IMR-90 (cell line): ENCODE measurements at regions of chr16 and their contacts with region 1.

Region 1: GRCh38 chr16:87114832-87115231 is 202.4 kb downstream of the C16orf95 start:
- DNase-seq: no peak
- ATAC-seq: no peak
- H3K4me3 ChIP-seq: no peak overlapping the region
- H3K27ac ChIP-seq: no peak overlapping the region
- H3K4me1 ChIP-seq: no peaks in the 10 kb centered on the region
- H3K27me3 ChIP-seq: peaks cover 39% of the 10 kb centered on the region
- CTCF ChIP-seq: no peak
- POLR2A ChIP-seq: no peak
- RAD21 ChIP-seq: no peak

Region 2: DNA sequence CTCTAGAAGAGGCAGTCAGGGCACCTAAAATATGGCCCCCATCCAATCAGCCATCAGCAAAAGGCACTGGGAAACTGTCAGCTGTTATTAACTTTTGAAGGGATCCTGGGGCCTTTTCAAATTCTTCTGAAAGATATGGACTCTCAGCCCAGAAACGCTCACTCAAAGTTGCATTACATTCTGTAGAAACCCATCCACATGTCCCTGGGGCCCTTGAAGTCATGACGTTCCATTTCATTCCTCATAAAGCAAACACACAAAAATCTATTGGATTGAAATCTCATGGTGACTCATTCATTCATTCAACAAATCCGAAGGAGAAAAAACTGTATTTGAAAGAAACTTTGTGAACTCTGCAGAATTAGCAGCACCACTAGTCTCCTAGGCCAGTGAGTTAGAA is 12.9 kb before region 1 on chr16:
- CTCF ChIA-PET with region 1: interaction called, 10 read pairs
- POLR2A ChIA-PET with region 1: no interaction called
- dilution Hi-C with region 1: no loop called
- in situ Hi-C with region 1: no loop called
- intact Hi-C with region 1: no loop called
- DNase-seq: peak; percentile 54
- ATAC-seq: peak; percentile 57
- H3K4me3 ChIP-seq: no peak overlapping the region
- H3K27ac ChIP-seq: no peak overlapping the region
- H3K4me1 ChIP-seq: no peaks in the 10 kb centered on the region
- H3K27me3 ChIP-seq: peaks cover 46% of the 10 kb centered on the region
- CTCF ChIP-seq: no peak
- POLR2A ChIP-seq: no peak
- RAD21 ChIP-seq: no peak

Region 3: GRCh38 chr16:87227296-87227951 is 112.6 kb after region 1 on chr16:
- CTCF ChIA-PET with region 1: no interaction called
- POLR2A ChIA-PET with region 1: no interaction called
- dilution Hi-C with region 1: no loop called
- in situ Hi-C with region 1: no loop called
- intact Hi-C with region 1: no loop called
- DNase-seq: peak; percentile 93
- ATAC-seq: peak; percentile 91
- H3K4me3 ChIP-seq: no peak overlapping the region
- H3K27ac ChIP-seq: peak overlapping the region; percentile 87
- H3K4me1 ChIP-seq: peaks cover 5% of the 10 kb centered on the region
- H3K27me3 ChIP-seq: peaks cover 2% of the 10 kb centered on the region; the same call in 1 of the 2 replicates
- CTCF ChIP-seq: no peak
- POLR2A ChIP-seq: no peak
- RAD21 ChIP-seq: no peak